Endothelial cell of umbilical vein (primary cell): ENCODE measurements at regions of chr9 and their contacts with region 1.

Region 1: GRCh38 chr9:31119882-31120454 is 1264.5 kb upstream of the ACO1 start:
- DNase-seq: peak; percentile 47
- H3K4me3 ChIP-seq: no peak overlapping the region
- H3K27ac ChIP-seq: no peak overlapping the region
- H3K4me1 ChIP-seq: no peaks in the 10 kb centered on the region
- H3K27me3 ChIP-seq: no peaks in the 10 kb centered on the region
- CTCF ChIP-seq: peak; percentile 47
- POLR2A ChIP-seq: no peak

Region 2: GRCh38 chr9:30995951-30996738 is 123.8 kb before region 1 on chr9:
- CTCF ChIA-PET with region 1: no interaction called
- POLR2A ChIA-PET with region 1: no interaction called
- dilution Hi-C with region 1: no loop called
- intact Hi-C with region 1: no loop called
- DNase-seq: no peak
- H3K4me3 ChIP-seq: no peak overlapping the region
- H3K27ac ChIP-seq: no peak overlapping the region
- H3K4me1 ChIP-seq: no peaks in the 10 kb centered on the region
- H3K27me3 ChIP-seq: no peaks in the 10 kb centered on the region
- CTCF ChIP-seq: no peak
- POLR2A ChIP-seq: no peak

Region 3: DNA sequence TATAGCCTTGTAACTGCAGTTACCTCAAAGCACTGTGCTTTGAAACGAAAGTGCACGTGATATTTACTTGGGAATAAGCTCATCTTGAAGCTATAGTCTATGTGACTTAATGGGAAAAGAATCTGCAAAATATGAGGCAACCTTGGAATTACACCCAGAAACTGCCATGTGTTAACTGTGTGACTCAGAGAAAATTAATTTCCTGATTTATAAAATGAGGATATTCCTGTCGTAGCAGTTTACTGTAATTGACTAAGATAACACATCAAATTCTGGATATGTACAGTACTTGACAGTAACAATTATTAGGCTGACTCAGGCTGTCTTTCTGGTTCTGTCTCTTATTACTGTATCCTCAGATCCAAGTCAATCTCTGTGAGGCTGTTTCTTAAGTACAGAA is 184.6 kb after region 1 on chr9:
- CTCF ChIA-PET with region 1: interaction called, 7 read pairs
- POLR2A ChIA-PET with region 1: no interaction called
- dilution Hi-C with region 1: no loop called
- intact Hi-C with region 1: loop called (anchors 5 kb)
- DNase-seq: peak; percentile 95
- H3K4me3 ChIP-seq: no peak overlapping the region
- H3K27ac ChIP-seq: peak overlapping the region; percentile 83
- H3K4me1 ChIP-seq: peaks cover 25% of the 10 kb centered on the region
- H3K27me3 ChIP-seq: no peaks in the 10 kb centered on the region
- CTCF ChIP-seq: no peak
- POLR2A ChIP-seq: peak; percentile 39

Region 4: GRCh38 chr9:31799953-31800609 is 680.1 kb after region 1 on chr9:
- CTCF ChIA-PET with region 1: interaction called, 12 read pairs
- POLR2A ChIA-PET with region 1: no interaction called
- dilution Hi-C with region 1: no loop called
- intact Hi-C with region 1: loop called (anchors 1 kb)
- DNase-seq: peak; percentile 60
- H3K4me3 ChIP-seq: no peak overlapping the region
- H3K27ac ChIP-seq: no peak overlapping the region
- H3K4me1 ChIP-seq: no peaks in the 10 kb centered on the region
- H3K27me3 ChIP-seq: no peaks in the 10 kb centered on the region
- CTCF ChIP-seq: peak; percentile 44 to 51
- POLR2A ChIP-seq: no peak

Region 5: GRCh38 chr9:32251539-32251938 is 1131.6 kb after region 1 on chr9:
- CTCF ChIA-PET with region 1: interaction called, 6 read pairs
- POLR2A ChIA-PET with region 1: no interaction called
- dilution Hi-C with region 1: no loop called
- intact Hi-C with region 1: loop called (anchors 1 kb)
- DNase-seq: peak; percentile 58
- H3K4me3 ChIP-seq: no peak overlapping the region
- H3K27ac ChIP-seq: no peak overlapping the region
- H3K4me1 ChIP-seq: no peaks in the 10 kb centered on the region
- H3K27me3 ChIP-seq: no peaks in the 10 kb centered on the region
- CTCF ChIP-seq: peak; percentile 46 to 62
- POLR2A ChIP-seq: no peak

Region 6: GRCh38 chr9:32350682-32351081 is 1230.7 kb after region 1 on chr9:
- CTCF ChIA-PET with region 1: no interaction called
- POLR2A ChIA-PET with region 1: no interaction called
- dilution Hi-C with region 1: no loop called
- intact Hi-C with region 1: loop called (anchors 5 kb)
- DNase-seq: peak; percentile 26
- H3K4me3 ChIP-seq: no peak overlapping the region
- H3K27ac ChIP-seq: no peak overlapping the region
- H3K4me1 ChIP-seq: no peaks in the 10 kb centered on the region
- H3K27me3 ChIP-seq: peaks cover 2 to 3% of the 10 kb centered on the region in 2 experiments
- CTCF ChIP-seq: no peak
- POLR2A ChIP-seq: no peak